Activated naive CD4-positive, alpha-beta T cell treated with anti-CD3 and anti-CD28 coated beads for 36 hours (primary cell): ENCODE measurements at regions of chr4 and their contacts with region 1.

Region 1: DNA sequence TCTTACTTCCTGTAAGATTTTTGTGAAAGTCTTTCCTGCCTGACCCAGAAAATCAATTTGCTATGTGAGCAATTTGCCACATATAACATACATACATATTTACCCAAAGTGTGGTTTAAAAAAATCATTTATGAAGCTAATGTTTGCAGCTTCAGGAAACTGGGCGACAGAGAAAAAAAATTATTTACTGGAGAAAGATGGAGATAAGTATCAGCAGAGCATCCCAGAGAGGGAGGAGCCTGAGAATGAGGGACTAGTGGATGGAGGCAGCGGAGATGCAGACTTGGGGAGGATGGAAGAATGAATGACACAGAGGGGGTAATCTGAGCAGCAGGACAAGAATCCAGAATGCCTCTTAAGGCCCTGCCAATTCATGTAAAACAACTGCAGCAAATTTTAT is 975 bp upstream of the GYPA start:
- DNase-seq: no peak
- H3K4me3 Mint-ChIP-seq: no peak overlapping the region
- H3K27ac Mint-ChIP-seq: no peak overlapping the region
- H3K4me1 Mint-ChIP-seq: no peaks in the 10 kb centered on the region
- H3K27me3 Mint-ChIP-seq: peaks cover 9% of the 10 kb centered on the region

Region 2: DNA sequence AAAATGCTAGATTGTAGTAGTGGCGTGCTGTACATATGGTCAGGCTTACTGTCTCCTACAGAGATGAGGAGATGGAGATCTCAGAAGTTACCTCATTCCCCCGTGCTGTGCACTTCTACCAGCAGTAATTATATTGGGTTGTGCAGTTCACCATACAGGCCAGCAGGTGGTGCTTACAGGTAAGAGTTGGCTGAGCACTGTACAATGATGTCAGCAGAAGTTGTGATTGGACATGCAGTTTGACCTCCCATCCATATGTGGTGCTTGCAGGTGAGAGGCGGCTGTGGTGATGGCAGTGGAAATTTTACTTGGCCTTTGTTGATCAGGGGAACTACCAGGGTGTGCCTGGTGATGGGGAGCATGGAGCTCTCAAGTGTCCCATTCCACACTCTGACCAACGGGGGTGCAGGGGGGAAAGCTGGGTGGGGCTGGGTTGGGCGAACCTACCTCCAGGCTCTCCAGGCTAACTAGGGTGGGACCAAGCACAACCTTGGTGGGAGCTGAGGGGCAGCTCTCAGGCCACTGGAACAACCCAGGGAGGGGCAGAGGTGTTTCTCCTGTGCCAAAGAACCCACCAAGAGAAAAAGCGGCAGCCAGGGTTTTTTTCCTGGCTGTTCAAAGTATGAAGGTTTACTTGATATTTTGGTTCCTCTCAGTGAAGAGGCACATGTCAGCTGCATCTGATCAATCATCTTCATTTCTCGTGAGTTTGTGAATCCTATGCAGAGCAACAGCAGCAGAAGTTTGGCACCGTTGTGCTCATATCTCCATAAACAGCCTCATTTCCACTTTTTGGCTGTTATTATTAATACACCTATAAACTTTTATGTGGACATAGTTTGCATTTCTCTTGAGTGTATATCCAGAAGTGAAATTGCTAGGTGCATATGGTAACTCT is 367.2 kb before region 1 on chr4:
- CTCF ChIA-PET with region 1: no interaction called
- intact Hi-C with region 1: loop called (anchors 1 kb)
- DNase-seq: peak; percentile 63
- H3K4me3 Mint-ChIP-seq: no peak overlapping the region
- H3K27ac Mint-ChIP-seq: no peak overlapping the region
- H3K4me1 Mint-ChIP-seq: no peaks in the 10 kb centered on the region
- H3K27me3 Mint-ChIP-seq: peaks cover 2% of the 10 kb centered on the region